Mammary epithelial cell (primary cell): ENCODE measurements at regions of chr6 and their contacts with region 1.

Region 1: DNA sequence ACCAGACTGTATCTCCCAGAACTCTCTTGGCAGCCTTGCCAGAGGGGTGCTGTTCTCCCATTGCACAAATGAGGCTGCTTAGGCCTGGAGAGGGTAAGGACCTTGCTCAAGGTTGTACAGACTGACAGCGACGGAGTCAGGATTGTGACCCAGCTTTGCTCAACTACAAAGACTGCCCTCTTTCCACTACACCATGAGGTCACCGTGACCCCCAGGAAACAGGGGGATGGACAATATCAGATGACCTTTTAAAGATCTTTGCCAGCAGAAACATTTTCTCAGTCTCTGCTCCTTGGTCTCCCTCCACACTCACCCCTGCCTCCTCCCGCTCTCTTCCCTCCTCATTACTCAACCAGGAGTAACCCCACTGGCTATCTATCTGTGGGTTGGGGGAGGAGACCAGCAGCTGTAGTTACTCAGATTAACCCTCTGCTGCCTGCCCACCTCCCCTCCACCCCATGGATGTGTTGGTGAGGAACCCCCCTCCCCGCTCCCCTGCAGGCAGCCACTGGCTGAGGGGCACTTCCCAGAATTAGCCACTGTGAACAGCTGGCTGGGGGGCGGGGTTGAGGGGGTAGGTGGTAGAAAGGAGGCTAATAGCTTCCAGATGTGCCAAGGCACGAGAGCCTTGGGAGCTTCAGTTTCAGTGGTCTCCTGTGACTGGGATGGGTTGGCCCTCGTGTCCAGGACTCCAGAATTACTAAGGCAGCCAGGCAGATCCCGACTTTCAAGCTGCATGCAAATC is 26.9 kb upstream of the MRPS18A start:
- DNase-seq: no peak
- H3K4me3 ChIP-seq: no peak overlapping the region
- H3K27ac ChIP-seq: no peak overlapping the region
- H3K4me1 ChIP-seq: no peaks in the 10 kb centered on the region
- H3K27me3 ChIP-seq: no peaks in the 10 kb centered on the region
- CTCF ChIP-seq: no peak

Region 2: GRCh38 chr6:43817192-43817591 is 102.7 kb after region 1 on chr6:
- CTCF ChIA-PET with region 1: no interaction called
- dilution Hi-C with region 1: loop called (anchors 5 kb)
- in situ Hi-C with region 1: no loop called
- intact Hi-C with region 1: no loop called
- DNase-seq: peak; percentile 14
- H3K4me3 ChIP-seq: no peak overlapping the region
- H3K27ac ChIP-seq: no peak overlapping the region
- H3K4me1 ChIP-seq: peaks cover 6% of the 10 kb centered on the region
- H3K27me3 ChIP-seq: no peaks in the 10 kb centered on the region
- CTCF ChIP-seq: peak in 1 of 2 donors; percentile 36